ENCODE measurements at regions of chr3 and their contacts with region 1.

Region 1: DNA sequence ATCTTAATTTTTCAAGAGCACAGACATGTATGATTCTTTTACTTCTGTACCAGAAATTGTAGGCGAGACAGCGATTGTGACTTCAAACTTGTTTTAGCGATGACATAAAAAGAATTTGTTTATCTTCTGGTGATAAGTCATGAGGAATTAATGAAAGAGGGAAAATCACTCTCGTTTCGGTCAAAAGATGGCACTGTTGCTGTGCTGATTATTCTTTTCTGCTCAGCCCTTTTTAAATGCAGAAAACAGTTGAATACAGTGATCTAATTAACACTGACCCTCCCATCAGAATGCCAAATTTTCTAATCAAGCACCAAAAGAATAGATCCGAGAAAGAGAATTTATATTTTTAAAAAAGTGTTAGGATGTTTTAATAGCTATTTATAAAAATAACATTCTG is 52.6 kb downstream of the NSUN3 start:
- DNase-seq: peak; percentile 73
- H3K4me3 ChIP-seq: no peak overlapping the region
- H3K27ac ChIP-seq: no peak overlapping the region
- H3K4me1 ChIP-seq: peaks cover 42% of the 10 kb centered on the region
- H3K27me3 ChIP-seq: no peaks in the 10 kb centered on the region
- CTCF ChIP-seq: peak; percentile 74

Region 2: GRCh38 chr3:94162700-94163099 is 47.2 kb after region 1 on chr3:
- CTCF ChIA-PET with region 1: no interaction called
- POLR2A ChIA-PET with region 1: no interaction called
- intact Hi-C with region 1: no loop called
- DNase-seq: peak; percentile 49
- H3K4me3 ChIP-seq: no peak overlapping the region
- H3K27ac ChIP-seq: no peak overlapping the region
- H3K4me1 ChIP-seq: peaks cover 24% of the 10 kb centered on the region
- H3K27me3 ChIP-seq: peaks cover 3% of the 10 kb centered on the region
- CTCF ChIP-seq: no peak

Region 3: DNA sequence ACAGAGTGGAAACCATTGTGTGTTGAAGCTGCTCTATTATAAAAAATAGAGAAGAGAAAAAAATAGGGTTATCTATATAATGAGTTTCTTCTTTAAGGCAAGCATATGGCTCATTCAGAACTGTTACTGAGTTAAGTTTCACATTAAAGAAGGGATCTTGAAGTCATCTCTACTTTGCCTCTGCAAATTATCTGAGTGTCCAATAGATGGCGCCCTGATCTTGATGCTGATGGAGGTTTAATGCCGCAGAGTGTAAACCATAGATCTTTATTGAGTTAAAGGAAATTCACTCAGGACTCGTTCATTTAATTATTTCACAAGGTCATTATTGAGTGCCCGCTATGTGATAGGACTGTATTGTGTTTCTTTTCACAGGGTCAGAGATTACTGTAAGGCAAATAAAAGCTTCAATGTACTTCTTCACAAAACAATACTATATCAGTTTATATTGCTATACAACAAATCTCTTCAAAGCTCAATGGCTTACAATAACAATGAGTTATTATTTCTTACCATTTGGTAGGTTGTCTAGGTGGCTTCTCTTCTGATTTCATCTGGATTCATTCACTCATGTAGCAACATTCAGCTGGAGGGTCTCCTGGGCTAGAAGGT is 118.8 kb after region 1 on chr3:
- CTCF ChIA-PET with region 1: no interaction called
- POLR2A ChIA-PET with region 1: no interaction called
- intact Hi-C with region 1: loop called (anchors 5 kb)
- DNase-seq: peak; percentile 58
- H3K4me3 ChIP-seq: no peak overlapping the region
- H3K27ac ChIP-seq: no peak overlapping the region
- H3K4me1 ChIP-seq: no peaks in the 10 kb centered on the region
- H3K27me3 ChIP-seq: no peaks in the 10 kb centered on the region
- CTCF ChIP-seq: peak; percentile 91

Region 4: DNA sequence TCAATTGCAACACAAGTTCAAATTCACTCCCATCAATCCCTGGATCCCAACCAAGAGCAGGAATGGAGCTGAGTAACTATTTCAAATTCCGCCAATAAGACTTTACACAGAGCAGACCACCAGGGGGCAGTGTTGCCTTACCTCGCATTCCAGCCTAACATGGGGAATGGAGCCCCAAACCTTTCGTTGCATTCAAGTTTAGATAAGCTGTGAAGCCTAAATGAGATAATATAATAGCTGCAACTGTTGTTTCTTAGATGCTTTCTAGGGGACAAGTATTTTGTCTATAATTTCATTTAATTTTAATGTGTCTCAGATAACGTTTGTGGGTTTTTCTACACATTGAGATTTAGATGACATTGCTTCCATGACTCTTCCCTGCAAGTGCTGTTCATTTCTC is 134.1 kb after region 1 on chr3:
- CTCF ChIA-PET with region 1: no interaction called
- POLR2A ChIA-PET with region 1: no interaction called
- intact Hi-C with region 1: no loop called
- DNase-seq: peak; percentile 80
- H3K4me3 ChIP-seq: no peak overlapping the region
- H3K27ac ChIP-seq: no peak overlapping the region
- H3K4me1 ChIP-seq: peaks cover 9% of the 10 kb centered on the region
- H3K27me3 ChIP-seq: peaks cover 6% of the 10 kb centered on the region
- CTCF ChIP-seq: peak; percentile 95

Region 5: DNA sequence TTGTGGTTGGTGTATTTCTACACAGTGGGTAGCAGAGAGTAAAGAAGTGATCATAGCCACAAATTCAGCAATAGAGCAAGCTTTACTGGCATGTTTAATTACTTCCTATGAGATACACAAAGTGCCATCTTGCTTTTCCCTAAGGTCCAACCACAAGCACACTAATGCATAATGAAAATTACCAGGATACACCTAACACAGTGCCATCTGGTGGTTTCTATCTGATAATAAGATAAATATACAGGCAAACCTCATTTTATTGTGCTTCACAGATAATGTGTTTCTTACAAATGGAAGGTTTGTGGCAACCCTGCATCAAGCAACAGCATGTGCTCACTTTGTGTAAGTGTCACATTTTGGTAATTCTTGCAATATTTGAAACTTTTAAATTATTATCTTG is 170.4 kb after region 1 on chr3:
- CTCF ChIA-PET with region 1: no interaction called
- POLR2A ChIA-PET with region 1: no interaction called
- intact Hi-C with region 1: loop called (anchors 2 kb)
- DNase-seq: peak; percentile 57
- H3K4me3 ChIP-seq: no peak overlapping the region
- H3K27ac ChIP-seq: no peak overlapping the region
- H3K4me1 ChIP-seq: no peaks in the 10 kb centered on the region
- H3K27me3 ChIP-seq: no peaks in the 10 kb centered on the region
- CTCF ChIP-seq: peak; percentile 60

Region 6: DNA sequence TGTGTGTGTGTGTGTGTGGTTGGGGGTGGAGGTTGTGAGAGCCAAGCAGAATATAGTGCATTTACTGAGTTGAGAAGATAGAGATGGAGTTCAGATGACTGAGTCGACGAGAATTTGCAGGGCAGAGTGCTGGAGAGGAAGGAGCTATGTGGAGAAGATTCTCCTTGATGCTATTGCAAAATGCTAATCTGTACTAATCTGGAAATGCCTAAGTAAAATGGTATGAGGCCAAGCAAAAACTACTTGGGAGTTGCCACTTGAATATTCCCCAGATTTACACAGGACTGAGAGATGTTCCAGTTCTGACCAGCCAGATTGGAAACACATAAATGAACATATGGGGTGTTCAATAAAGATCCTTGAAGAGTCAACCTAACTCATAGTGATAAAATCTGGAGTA is 263.8 kb after region 1 on chr3:
- CTCF ChIA-PET with region 1: no interaction called
- POLR2A ChIA-PET with region 1: no interaction called
- intact Hi-C with region 1: no loop called
- DNase-seq: no peak
- H3K4me3 ChIP-seq: no peak overlapping the region
- H3K27ac ChIP-seq: no peak overlapping the region
- H3K4me1 ChIP-seq: no peaks in the 10 kb centered on the region
- H3K27me3 ChIP-seq: no peaks in the 10 kb centered on the region
- CTCF ChIP-seq: no peak

Region 7: GRCh38 chr3:94500146-94500545 is 384.7 kb after region 1 on chr3:
- CTCF ChIA-PET with region 1: no interaction called
- POLR2A ChIA-PET with region 1: no interaction called
- intact Hi-C with region 1: loop called (anchors 10 kb)
- DNase-seq: no peak
- H3K4me3 ChIP-seq: no peak overlapping the region
- H3K27ac ChIP-seq: no peak overlapping the region
- H3K4me1 ChIP-seq: no peaks in the 10 kb centered on the region
- H3K27me3 ChIP-seq: no peaks in the 10 kb centered on the region
- CTCF ChIP-seq: no peak